ENCODE measurements at regions of chr3 and their contacts with region 1.

Region 1: DNA sequence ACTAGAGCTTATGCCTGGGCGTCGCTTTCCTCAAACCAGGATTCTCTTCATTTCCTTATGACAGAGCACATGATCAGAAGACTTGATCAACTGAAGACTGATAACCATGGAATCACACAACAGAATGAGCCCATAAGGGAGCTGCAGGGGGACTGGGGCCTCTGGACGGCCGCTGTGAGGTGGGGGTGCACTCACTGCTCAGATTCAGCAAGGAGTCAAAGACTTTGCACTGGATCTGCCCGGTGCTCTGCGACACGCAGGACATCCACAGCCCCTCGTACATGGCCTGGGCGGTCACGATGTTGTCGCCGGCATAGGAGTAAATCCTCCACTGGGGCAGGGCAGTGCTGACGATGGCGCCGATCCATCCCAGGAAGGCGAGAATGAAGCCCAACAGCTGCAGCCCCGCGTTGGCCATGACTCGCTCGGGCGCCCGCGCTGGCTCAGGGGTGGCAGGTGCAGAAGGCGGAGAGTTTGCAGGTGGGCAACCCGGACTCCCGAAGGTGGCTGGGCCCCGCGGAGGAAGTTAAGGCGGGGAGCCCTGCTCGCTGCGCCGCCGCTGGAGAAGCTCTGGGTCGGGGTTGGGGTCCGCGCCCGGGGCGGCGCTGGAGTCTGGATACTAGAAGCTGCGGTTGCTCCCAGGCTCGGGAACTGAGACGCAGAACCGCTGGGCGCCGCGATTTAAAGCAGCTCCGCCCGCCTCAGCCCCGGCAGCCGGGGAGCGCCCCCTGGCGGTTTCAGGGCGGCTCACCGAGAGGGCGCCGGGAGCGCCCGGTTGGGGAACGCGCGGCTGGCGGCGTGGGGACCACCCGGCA is at the start of gene CLDN1:
- DNase-seq: no peak
- H3K4me3 ChIP-seq: peak within 1 kb of the TSS; percentile 61
- H3K27me3 ChIP-seq: no peaks in the 10 kb centered on the region
- CTCF ChIP-seq: peak; percentile 78
- polyA plus RNA-seq, gene CLDN1: 1.3 and 1.7 TPM in 2 replicates

Region 2: GRCh38 chr3:189967254-189967865 is 354.6 kb before region 1 on chr3:
- CTCF ChIA-PET with region 1: interaction called, 40 read pairs
- POLR2A ChIA-PET with region 1: interaction called, 3 read pairs
- DNase-seq: no peak
- H3K4me3 ChIP-seq: no peak overlapping the region
- H3K27me3 ChIP-seq: no peaks in the 10 kb centered on the region
- CTCF ChIP-seq: peak; percentile 72

Region 3: DNA sequence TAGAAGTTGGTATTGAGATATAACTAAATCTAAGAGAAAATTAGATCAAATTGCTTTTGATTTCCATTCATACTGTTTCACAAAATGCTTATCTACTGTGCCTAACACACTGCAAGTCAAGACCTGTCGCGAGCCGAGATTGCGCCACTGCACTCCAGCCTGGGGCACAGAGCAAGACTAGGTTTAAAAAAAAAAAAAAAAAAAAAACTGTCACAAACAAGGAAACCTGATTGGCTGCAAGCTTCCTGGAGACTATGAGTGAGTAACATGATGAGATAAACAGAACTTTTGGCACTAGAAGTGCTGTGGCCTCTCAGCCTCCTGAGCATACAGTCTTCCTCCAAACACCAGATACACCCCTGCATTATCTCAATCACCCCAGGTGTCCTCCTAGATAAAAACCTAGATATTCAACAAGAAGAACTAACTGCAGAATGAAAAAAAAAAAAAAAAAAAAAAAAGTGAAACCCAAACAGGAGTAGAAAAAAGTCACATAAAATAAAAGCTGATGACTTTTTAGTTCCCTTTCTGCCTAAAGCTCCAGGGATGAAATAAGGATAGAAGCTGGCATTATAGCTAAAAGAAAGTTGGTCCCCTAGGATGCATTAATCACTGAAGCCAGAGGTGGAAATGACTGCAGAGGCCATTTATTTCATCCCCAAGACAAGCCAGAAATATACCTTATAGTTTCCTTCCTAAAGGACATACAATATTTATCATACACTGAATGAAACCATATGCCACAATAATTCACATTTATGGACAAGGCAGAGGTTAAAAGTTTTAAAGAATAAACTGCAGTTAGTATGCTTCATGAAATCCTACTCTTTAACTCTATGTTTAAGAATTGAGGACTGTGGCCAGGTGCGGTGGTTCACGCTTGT is 283.7 kb before region 1 on chr3:
- CTCF ChIA-PET with region 1: no interaction called
- POLR2A ChIA-PET with region 1: no interaction called
- DNase-seq: no peak
- H3K4me3 ChIP-seq: no peak overlapping the region
- H3K27me3 ChIP-seq: no peaks in the 10 kb centered on the region
- CTCF ChIP-seq: no peak

Region 4: DNA sequence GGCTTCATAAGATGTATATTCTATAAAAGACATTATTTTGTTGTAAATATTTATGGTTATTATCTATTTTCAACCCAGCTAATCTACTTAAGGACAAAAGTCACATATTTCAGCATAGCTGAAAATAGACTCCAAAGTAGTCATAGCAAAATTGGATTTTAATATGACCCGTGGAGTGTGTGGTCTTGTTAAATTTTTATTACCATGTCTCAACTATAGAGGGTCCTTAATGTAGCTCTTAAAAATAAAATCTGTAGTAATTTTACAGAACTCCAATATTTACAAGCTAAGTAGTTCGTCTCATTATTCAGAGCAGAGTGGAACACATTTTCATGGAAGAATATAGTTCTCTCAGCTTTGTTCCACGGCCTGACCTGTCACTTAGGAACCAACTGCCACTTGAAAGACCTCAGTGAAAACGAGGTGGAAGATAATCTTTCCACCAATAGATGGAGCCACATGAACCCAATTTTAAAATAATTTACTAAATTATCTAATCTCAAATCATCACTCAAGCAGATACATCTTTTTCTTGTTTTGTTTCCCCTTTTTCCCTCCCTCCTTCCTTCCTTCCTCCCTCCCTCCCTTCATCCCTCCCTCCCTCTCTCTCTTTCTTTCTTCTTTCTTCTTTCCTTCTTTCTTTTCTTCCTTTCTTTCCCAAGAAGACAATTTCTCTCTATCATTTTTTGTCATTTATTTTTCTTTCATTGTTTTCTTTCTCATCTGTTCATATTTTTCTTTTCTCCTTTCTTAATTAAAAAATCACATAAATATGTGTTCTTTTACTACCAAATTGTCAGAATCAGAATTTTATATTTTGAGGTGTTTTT is 96.9 kb before region 1 on chr3:
- CTCF ChIA-PET with region 1: interaction called, 109 read pairs
- POLR2A ChIA-PET with region 1: no interaction called
- DNase-seq: peak; percentile 11
- H3K4me3 ChIP-seq: no peak overlapping the region
- H3K27me3 ChIP-seq: no peaks in the 10 kb centered on the region
- CTCF ChIP-seq: peak; percentile 57

Region 5: GRCh38 chr3:190302209-190302867 is 19.7 kb before region 1 on chr3:
- CTCF ChIA-PET with region 1: interaction called, 10 read pairs
- POLR2A ChIA-PET with region 1: no interaction called
- DNase-seq: no peak
- H3K4me3 ChIP-seq: no peak overlapping the region
- H3K27me3 ChIP-seq: no peaks in the 10 kb centered on the region
- CTCF ChIP-seq: no peak

Region 6: GRCh38 chr3:190339130-190339529 is 17.1 kb after region 1 on chr3:
- CTCF ChIA-PET with region 1: interaction called, 47 read pairs
- POLR2A ChIA-PET with region 1: no interaction called
- DNase-seq: no peak
- H3K4me3 ChIP-seq: no peak overlapping the region
- H3K27me3 ChIP-seq: no peaks in the 10 kb centered on the region
- CTCF ChIP-seq: 0 out of 2 replicates have a peak, but pooled peaks have one; percentile 26

Region 7: DNA sequence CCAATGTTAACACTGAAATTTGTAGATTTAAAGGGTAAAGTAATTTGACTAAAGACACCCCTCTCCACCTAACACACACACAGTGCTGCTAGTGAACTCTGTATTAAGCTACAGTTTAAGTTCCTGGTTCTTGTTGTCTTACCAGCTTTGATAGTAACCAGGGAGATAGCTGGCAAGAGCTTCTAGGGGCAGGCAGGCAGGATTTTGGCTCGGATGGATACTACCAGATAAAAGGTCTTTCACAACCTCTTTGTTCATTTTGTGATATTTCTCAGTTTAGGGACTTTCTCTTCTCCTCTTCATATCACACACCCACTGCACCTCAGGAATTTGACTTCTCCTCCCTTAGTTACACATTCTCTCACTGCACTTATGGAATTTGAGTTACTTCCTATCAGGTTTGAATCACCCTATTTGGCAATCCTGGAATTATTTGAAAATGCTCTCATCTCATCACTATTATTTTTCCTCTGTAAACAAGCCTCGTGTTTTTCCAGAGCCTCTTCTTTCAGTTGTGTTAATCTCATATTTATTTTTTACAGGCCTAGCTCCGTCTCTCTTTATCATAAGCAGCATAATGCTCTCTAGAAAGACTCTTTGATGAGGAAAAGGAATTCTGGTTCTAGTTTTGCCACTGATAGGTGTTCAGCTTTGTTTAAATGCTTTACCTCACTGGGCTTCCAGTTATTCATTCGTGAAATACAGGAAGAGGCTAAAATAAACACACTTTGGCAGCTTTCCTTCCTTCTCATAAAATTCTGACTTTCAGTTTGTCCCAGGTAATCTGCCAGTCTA is 23.2 kb after region 1 on chr3:
- CTCF ChIA-PET with region 1: interaction called, 47 read pairs
- POLR2A ChIA-PET with region 1: no interaction called
- DNase-seq: peak; percentile 81
- H3K4me3 ChIP-seq: no peak overlapping the region
- H3K27me3 ChIP-seq: no peaks in the 10 kb centered on the region
- CTCF ChIP-seq: no peak

Region 8: GRCh38 chr3:190424478-190425439 is 102.8 kb after region 1 on chr3:
- CTCF ChIA-PET with region 1: interaction called, 30 read pairs
- POLR2A ChIA-PET with region 1: no interaction called
- DNase-seq: no peak
- H3K4me3 ChIP-seq: no peak overlapping the region
- H3K27me3 ChIP-seq: no peaks in the 10 kb centered on the region
- CTCF ChIP-seq: peak; percentile 67

Region 9: DNA sequence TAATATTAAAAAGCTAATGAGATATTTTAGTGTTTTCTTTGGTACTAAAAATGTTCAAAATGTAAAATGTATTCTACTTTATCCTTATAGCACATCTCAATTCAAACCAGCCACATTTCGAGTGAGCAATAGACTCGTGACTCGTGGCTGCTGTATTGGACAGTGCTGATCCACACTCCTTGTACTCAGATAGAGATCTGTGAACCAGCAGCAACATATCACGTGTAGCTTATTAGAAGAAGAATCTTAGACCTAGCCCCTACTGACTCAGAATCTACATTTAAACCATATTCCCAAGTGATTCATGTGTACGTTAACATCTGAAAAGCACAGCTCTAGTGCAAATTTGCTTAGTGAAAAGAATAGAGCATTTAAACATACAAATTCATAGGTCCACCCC is 322.8 kb after region 1 on chr3:
- CTCF ChIA-PET with region 1: no interaction called
- POLR2A ChIA-PET with region 1: no interaction called
- DNase-seq: no peak
- H3K4me3 ChIP-seq: no peak overlapping the region
- H3K27me3 ChIP-seq: no peaks in the 10 kb centered on the region
- CTCF ChIP-seq: no peak

Region 10: GRCh38 chr3:190739641-190740185 is 417.7 kb after region 1 on chr3:
- CTCF ChIA-PET with region 1: no interaction called
- POLR2A ChIA-PET with region 1: no interaction called
- DNase-seq: no peak
- H3K4me3 ChIP-seq: no peak overlapping the region
- H3K27me3 ChIP-seq: no peaks in the 10 kb centered on the region
- CTCF ChIP-seq: no peak